GM10248 (cell line): ENCODE measurements at regions of chr12 and their contacts with region 1.

Region 1: GRCh38 chr12:82358200-82359114 is at the starts of genes CCDC59 and METTL25:
- DNase-seq: peak; percentile 91
- CTCF ChIP-seq: peak; percentile 77

Region 2: GRCh38 chr12:82375201-82375600 is 16.7 kb after region 1 on chr12:
- CTCF ChIA-PET with region 1: interaction called, 59 read pairs
- POLR2A ChIA-PET with region 1: no interaction called
- DNase-seq: no peak
- CTCF ChIP-seq: no peak

Region 3: DNA sequence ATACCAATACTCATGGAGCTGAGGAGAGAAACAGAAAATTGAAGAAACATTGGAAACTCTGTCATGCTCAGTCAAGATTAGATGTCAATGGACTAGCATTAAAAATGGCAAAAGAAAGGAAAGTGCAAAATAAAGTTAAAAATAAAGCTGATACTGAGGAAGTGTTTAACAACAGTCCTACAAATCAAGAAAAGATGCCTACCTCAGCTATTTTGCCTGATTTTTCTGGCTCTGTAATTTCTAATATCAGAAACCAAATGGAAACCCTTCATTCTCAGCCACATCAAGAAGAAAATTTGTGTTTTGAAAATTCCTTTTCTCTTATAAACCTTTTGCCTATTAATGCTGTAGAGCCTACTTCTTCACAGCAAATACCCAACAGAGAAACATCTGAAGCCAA is 40.4 kb after region 1 on chr12:
- CTCF ChIA-PET with region 1: interaction called, 12 read pairs
- POLR2A ChIA-PET with region 1: no interaction called
- DNase-seq: no peak
- CTCF ChIP-seq: no peak

Region 4: GRCh38 chr12:82438356-82438755 is 79.9 kb after region 1 on chr12:
- CTCF ChIA-PET with region 1: interaction called, 16 read pairs
- POLR2A ChIA-PET with region 1: interaction called, 5 read pairs
- DNase-seq: no peak
- CTCF ChIP-seq: no peak